ENCODE measurements at regions of chr1 and their contacts with region 1.

Region 1: GRCh38 chr1:92994105-92994712 is 32.9 kb upstream of the DIPK1A start:
- DNase-seq: peak; percentile 57
- ATAC-seq: peak; percentile 90
- H3K4me3 Mint-ChIP-seq: no peak overlapping the region
- H3K27ac Mint-ChIP-seq: no peak overlapping the region
- H3K4me1 Mint-ChIP-seq: peaks cover 11% of the 10 kb centered on the region
- H3K27me3 Mint-ChIP-seq: no peaks in the 10 kb centered on the region
- CTCF ChIP-seq: peak; percentile 76

Region 2: GRCh38 chr1:92858564-92859399 is 135.4 kb before region 1 on chr1:
- CTCF ChIA-PET with region 1: interaction called, 38 read pairs
- POLR2A ChIA-PET with region 1: interaction called, 3 read pairs
- DNase-seq: peak; percentile 41
- ATAC-seq: peak; percentile 85
- H3K4me3 Mint-ChIP-seq: no peak overlapping the region
- H3K27ac Mint-ChIP-seq: no peak overlapping the region
- H3K4me1 Mint-ChIP-seq: no peaks in the 10 kb centered on the region
- H3K27me3 Mint-ChIP-seq: no peaks in the 10 kb centered on the region
- CTCF ChIP-seq: peak; percentile 79

Region 3: DNA sequence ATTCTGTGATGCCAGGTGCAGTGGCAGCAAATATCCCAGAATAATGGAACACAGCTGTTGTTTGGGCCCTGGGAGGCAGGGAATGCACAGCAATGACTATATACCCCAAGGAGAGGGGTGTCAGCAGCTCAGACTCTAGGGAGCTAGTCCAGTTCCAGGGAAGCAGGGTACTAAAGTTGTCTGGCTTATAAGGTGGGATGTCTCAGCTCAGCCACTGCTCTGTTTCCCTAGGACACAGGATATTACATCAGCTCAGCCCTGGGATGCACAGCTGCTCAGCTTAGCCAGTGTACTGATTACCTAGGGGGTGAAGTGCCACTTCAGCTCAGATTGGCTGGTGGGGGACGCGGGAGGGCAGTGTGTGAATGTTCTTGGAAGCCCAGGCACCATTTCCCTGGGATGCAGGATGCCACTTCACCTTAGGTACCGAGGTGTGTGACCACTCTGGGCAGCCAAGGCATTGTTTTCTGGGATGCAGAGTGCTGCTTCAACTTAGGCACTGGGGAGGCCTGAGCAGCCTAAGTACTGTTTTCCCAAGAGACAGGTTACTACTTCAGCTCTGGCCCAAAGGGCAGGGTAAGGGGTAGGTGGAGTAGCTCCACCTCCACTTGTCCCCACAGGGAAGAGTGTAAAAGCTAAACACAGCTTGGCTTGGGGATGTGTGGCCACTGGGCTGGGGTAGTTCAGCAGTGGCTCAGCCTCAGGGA is 92.4 kb before region 1 on chr1:
- CTCF ChIA-PET with region 1: interaction called, 11 read pairs
- POLR2A ChIA-PET with region 1: no interaction called
- DNase-seq: no peak
- ATAC-seq: no peak
- H3K4me3 Mint-ChIP-seq: no peak overlapping the region
- H3K27ac Mint-ChIP-seq: no peak overlapping the region
- H3K4me1 Mint-ChIP-seq: no peaks in the 10 kb centered on the region
- H3K27me3 Mint-ChIP-seq: no peaks in the 10 kb centered on the region; the same call in 1 of the 2 replicates
- CTCF ChIP-seq: no peak

Region 4: DNA sequence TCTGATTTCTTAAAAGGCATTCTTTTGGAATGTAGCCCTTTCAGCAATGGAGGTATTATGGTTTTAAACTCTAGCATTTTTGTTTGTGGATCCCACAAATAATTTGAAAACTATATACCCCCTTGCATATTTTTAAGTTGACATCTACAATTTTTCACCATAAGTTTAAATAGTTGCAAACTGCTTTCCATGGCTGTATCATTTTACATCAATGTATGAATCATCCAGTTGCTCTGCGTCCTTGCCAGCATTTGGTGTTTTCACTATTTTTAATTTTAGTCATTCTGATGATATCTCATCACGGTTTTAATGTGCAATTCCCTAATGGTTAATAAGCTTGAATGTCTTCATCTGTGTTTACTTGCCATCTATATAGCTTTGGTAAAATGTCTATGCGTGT is 53.7 kb before region 1 on chr1:
- CTCF ChIA-PET with region 1: no interaction called
- POLR2A ChIA-PET with region 1: no interaction called
- DNase-seq: no peak
- ATAC-seq: no peak
- H3K4me3 Mint-ChIP-seq: no peak overlapping the region
- H3K27ac Mint-ChIP-seq: no peak overlapping the region
- H3K4me1 Mint-ChIP-seq: 0 out of 2 replicates have a peak, but pooled peaks cover 6% of the 10 kb centered on the region
- H3K27me3 Mint-ChIP-seq: no peaks in the 10 kb centered on the region
- CTCF ChIP-seq: no peak

Region 5: DNA sequence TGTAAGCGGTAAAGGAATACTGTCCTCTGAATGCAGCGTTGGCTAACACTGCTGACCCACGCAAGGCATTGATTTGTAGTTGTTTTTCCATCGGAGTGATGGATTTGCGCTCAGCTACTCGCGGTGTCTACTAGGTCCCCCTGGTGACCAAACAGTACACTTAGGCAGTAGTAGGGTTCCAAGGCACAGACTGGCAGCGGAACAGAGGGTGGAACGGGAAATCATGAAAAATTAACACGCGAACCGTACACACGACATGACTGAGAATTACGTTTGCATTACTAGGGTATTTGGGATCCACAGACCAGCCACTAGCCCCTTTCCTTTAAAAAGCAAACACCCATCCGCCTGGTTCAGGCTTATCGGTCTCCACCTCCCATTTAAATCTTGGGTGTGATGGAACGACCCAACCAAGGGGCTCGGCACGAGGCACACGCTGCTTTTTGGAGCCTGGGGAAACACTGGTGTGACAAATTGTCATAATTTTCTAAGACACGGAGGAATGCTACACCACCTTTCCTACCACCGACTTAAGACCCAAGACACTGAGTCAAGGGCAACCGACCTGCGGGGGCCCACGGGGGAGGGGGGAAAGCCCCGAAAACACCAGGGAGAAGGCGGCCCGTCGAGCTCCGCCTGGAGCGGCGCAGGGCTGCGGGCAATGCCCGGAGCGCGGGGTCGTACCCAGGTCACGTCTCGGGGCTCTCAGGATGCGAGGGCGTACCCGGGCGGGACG is 33.6 kb before region 1 on chr1:
- CTCF ChIA-PET with region 1: interaction called, 43 read pairs
- POLR2A ChIA-PET with region 1: no interaction called
- DNase-seq: peak; percentile 23
- ATAC-seq: peak; percentile 37
- H3K4me3 Mint-ChIP-seq: peak overlapping the region; percentile 87
- H3K27ac Mint-ChIP-seq: no peak overlapping the region
- H3K4me1 Mint-ChIP-seq: peaks cover 13% of the 10 kb centered on the region
- H3K27me3 Mint-ChIP-seq: peaks cover 9% of the 10 kb centered on the region
- CTCF ChIP-seq: no peak

Region 6: GRCh38 chr1:92968138-92969032 is 25.8 kb before region 1 on chr1:
- CTCF ChIA-PET with region 1: interaction called, 43 read pairs
- POLR2A ChIA-PET with region 1: no interaction called
- DNase-seq: no peak
- ATAC-seq: peak; percentile 76
- H3K4me3 Mint-ChIP-seq: no peak overlapping the region
- H3K27ac Mint-ChIP-seq: no peak overlapping the region
- H3K4me1 Mint-ChIP-seq: peaks cover 20% of the 10 kb centered on the region
- H3K27me3 Mint-ChIP-seq: peaks cover 36% of the 10 kb centered on the region
- CTCF ChIP-seq: no peak

Region 7: GRCh38 chr1:93007941-93008577 is 13.8 kb after region 1 on chr1:
- CTCF ChIA-PET with region 1: interaction called, 12 read pairs
- POLR2A ChIA-PET with region 1: no interaction called
- DNase-seq: no peak
- ATAC-seq: no peak
- H3K4me3 Mint-ChIP-seq: no peak overlapping the region
- H3K27ac Mint-ChIP-seq: no peak overlapping the region
- H3K4me1 Mint-ChIP-seq: peaks cover 12% of the 10 kb centered on the region
- H3K27me3 Mint-ChIP-seq: no peaks in the 10 kb centered on the region
- CTCF ChIP-seq: no peak

Region 8: DNA sequence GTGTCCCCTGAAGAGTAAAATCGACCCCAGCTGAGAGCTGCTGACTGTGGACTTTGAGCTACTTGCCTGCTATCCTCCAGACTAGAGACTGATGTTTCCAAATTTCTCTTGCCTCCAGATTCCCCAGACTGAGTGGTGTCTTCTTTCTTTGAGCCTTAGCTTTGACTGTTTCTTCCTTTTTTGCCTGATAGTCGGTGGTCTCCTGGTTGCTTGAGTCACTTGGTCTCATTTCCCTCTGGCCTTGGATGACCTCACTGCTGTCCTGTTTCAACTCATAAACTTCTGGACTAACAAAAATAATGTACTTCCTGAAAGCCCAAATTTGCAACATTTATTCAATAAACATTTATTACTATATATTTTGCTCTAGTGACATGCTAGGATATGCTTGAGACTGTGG is 20.0 kb after region 1 on chr1:
- CTCF ChIA-PET with region 1: interaction called, 11 read pairs
- POLR2A ChIA-PET with region 1: no interaction called
- DNase-seq: no peak
- ATAC-seq: no peak
- H3K4me3 Mint-ChIP-seq: no peak overlapping the region
- H3K27ac Mint-ChIP-seq: no peak overlapping the region
- H3K4me1 Mint-ChIP-seq: peaks cover 17% of the 10 kb centered on the region
- H3K27me3 Mint-ChIP-seq: no peaks in the 10 kb centered on the region
- CTCF ChIP-seq: no peak

Measured in WTC11 (cell line).